Activated CD8-positive, alpha-beta memory T cell treated with anti-CD3 and anti-CD28 coated beads, Interleukin-2, amount 10 ng/mL, durations not matched to agents 7 days and 5 days (primary cell): ENCODE measurements at regions of chr17 and their contacts with region 1.

Region 1: GRCh38 chr17:43694077-43694870 is 32.6 kb upstream of the MEOX1 start:
- DNase-seq: peak; percentile 86
- ATAC-seq: peak; percentile 87
- H3K4me3 Mint-ChIP-seq: no peak overlapping the region
- H3K27ac Mint-ChIP-seq: no peak overlapping the region
- H3K4me1 Mint-ChIP-seq: peaks cover 3% of the 10 kb centered on the region
- H3K27me3 Mint-ChIP-seq: peaks cover 20% of the 10 kb centered on the region

Region 2: DNA sequence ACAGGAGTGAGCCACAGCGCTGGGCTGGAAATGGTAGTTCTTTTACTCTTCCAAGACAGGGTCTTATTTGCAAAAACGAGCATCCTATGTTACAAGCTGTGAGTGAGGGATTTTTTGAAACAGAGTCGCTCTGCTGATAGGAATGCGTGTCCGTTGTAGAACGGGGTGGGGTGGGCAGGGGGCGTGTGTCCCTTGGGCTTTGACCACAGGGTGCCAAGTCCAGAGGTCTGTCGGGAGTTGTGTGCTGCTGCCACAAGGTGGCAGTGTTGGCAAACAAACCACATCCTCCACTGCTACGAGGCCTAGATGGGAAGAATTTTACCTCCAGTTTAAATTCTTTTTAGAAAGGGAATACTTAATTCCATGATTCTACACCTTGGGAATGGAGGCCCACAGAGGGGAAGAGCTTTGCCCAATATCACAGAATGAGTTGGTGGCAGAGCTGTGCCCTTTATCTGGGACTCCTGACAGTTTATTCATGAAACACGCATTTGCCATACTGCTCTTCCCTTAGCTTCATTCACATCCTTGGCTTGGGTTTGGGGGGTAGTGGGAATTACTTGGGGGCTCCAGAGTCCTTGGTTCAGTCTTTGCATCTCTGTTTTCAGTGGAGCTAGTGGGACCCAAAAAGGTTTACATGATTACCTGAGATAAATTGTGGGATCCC is 117.6 kb before region 1 on chr17:
- CTCF ChIA-PET with region 1: interaction called, 11 read pairs
- DNase-seq: peak; percentile 70
- ATAC-seq: peak; percentile 85
- H3K4me3 Mint-ChIP-seq: no peak overlapping the region
- H3K27ac Mint-ChIP-seq: no peak overlapping the region
- H3K4me1 Mint-ChIP-seq: peaks cover 16% of the 10 kb centered on the region
- H3K27me3 Mint-ChIP-seq: peaks cover 5% of the 10 kb centered on the region

Region 3: GRCh38 chr17:43601280-43602039 is 92.8 kb before region 1 on chr17:
- CTCF ChIA-PET with region 1: no interaction called
- DNase-seq: no peak
- ATAC-seq: no peak
- H3K4me3 Mint-ChIP-seq: no peak overlapping the region
- H3K27ac Mint-ChIP-seq: no peak overlapping the region
- H3K4me1 Mint-ChIP-seq: no peaks in the 10 kb centered on the region
- H3K27me3 Mint-ChIP-seq: peaks cover 26% of the 10 kb centered on the region

Region 4: DNA sequence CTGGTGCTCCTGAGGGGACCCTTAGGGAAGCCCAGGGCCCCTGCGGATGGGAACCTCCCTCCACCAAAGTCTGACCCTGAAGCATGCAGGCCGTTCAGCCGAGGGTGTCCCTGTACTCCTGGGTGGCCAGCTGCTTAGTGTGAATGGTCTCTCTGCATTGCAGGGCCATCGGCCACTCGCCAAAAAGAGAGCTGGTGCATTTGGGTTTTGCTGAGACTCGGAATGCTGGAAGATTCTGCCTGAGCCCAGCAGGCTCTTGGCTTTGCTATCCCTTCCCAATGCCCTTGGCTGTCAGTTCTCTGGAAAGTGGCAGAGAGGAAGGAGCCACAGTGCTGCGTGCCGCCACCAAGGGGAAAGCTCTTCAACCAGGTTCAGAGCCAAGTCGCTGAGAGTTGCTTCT is 35.4 kb before region 1 on chr17:
- CTCF ChIA-PET with region 1: no interaction called
- DNase-seq: no peak
- ATAC-seq: no peak
- H3K4me3 Mint-ChIP-seq: no peak overlapping the region
- H3K27ac Mint-ChIP-seq: no peak overlapping the region
- H3K4me1 Mint-ChIP-seq: peaks cover 50% of the 10 kb centered on the region
- H3K27me3 Mint-ChIP-seq: peaks cover 37% of the 10 kb centered on the region

Region 5: GRCh38 chr17:43713494-43714162 is 19.4 kb after region 1 on chr17:
- CTCF ChIA-PET with region 1: interaction called, 13 read pairs
- DNase-seq: peak; percentile 44
- ATAC-seq: peak; percentile 88
- H3K4me3 Mint-ChIP-seq: peak overlapping the region; percentile 42
- H3K27ac Mint-ChIP-seq: no peak overlapping the region
- H3K4me1 Mint-ChIP-seq: peaks cover 13% of the 10 kb centered on the region
- H3K27me3 Mint-ChIP-seq: peaks cover 58% of the 10 kb centered on the region

Region 6: DNA sequence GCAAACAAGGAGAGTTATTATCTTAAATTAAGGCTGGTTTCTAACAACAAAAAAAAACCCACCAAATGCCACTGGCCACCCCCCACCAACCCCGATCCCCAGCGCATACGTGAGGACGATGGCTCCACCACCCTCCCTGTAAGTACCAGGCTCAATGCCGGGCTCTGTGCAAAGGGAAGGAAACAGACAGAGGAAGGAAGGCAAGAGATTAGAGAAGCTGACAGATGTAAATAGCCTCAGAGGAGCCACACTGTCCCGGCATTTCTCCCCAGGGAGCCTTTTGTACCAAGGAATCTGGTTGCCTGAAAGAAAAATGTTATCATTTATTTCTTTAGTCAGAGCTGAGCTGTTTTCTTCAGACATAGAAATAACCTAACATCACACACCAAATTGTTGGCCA is 51.3 kb after region 1 on chr17:
- CTCF ChIA-PET with region 1: interaction called, 11 read pairs
- DNase-seq: no peak
- ATAC-seq: no peak
- H3K4me3 Mint-ChIP-seq: no peak overlapping the region
- H3K27ac Mint-ChIP-seq: no peak overlapping the region
- H3K4me1 Mint-ChIP-seq: no peaks in the 10 kb centered on the region
- H3K27me3 Mint-ChIP-seq: peaks cover 67% of the 10 kb centered on the region

Region 7: DNA sequence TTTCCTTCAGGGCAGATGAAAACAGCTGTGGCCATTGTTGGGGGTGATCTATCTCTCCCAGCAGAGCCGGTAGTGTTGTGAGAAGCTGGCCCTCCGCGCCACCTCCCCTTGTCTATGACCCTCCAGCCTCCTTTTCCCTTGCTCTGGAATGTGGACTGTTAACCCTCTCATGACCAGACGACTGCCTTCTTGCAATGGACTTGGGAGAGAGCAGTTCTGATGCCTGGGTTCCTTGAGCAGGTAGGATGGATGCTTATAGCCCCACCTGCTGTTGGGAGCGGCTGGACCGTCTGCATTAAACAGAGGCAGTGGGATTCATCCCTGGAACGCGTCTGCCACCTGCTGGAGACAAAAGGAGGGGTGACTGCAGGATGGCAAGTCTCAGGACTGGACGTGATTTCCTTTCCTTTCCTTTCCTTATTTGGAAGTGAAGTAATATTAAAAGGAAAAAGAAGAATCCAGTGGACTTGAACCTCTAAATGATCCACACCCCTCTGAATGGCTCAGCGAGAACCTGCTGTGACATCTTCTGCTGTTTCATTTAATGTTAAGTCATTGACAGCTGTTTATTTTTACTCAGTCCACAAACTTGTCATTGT is 66.1 kb after region 1 on chr17:
- CTCF ChIA-PET with region 1: interaction called, 569 read pairs
- DNase-seq: peak; percentile 94
- ATAC-seq: peak; percentile 94
- H3K4me3 Mint-ChIP-seq: no peak overlapping the region
- H3K27ac Mint-ChIP-seq: no peak overlapping the region
- H3K4me1 Mint-ChIP-seq: no peaks in the 10 kb centered on the region
- H3K27me3 Mint-ChIP-seq: peaks cover 30% of the 10 kb centered on the region